ENCODE measurements at regions of chr15 and their contacts with region 1.

Region 1: GRCh38 chr15:95025924-95026728 is 794.8 kb downstream of the MCTP2 start:
- DNase-seq: peak; percentile 60 to 80 (median 64)
- ATAC-seq: peak; percentile 98
- H3K4me3 ChIP-seq: no peak overlapping the region
- H3K27ac ChIP-seq: no peak overlapping the region
- H3K4me1 ChIP-seq: no peaks in the 10 kb centered on the region
- H3K27me3 ChIP-seq: no peaks in the 10 kb centered on the region
- CTCF ChIP-seq: peak; percentile 59 to 76 (median 64)
- EP300 ChIP-seq: no peak
- POLR2A ChIP-seq: no peak
- RAD21 ChIP-seq: peak; percentile 47 to 76

Region 2: DNA sequence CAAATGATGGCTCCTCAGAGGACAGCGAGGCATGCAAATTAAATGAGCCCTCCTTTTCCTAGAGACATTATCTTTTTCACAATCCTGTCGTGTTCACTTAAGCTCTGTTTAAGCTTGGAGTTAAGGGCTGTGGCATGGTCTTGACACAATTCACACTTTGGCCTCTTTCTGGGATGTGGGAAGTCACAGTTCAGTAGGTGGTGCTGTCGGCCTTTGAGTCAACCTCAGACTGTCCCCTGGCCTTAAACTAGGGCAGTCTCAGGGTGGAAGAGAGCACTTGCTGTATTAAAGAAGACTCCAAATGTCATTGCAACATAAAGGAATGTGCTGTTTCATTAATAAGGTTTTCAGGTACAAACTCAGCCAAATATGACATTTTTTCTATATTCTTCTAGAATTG is 443.8 kb before region 1 on chr15:
- CTCF ChIA-PET with region 1: no interaction called
- POLR2A ChIA-PET with region 1: no interaction called
- in situ Hi-C with region 1: no loop called
- intact Hi-C with region 1: loop called (anchors 10 kb)
- DNase-seq: peak; percentile 14 to 46 (median 20)
- ATAC-seq: peak; percentile 91
- H3K4me3 ChIP-seq: no peak overlapping the region
- H3K27ac ChIP-seq: no peak overlapping the region
- H3K4me1 ChIP-seq: no peaks in the 10 kb centered on the region
- H3K27me3 ChIP-seq: no peaks in the 10 kb centered on the region; a peak in 1 of 5 replicates
- CTCF ChIP-seq: peak; percentile 37 to 57 (median 57); a peak in 5 of 6 replicates
- EP300 ChIP-seq: no peak
- POLR2A ChIP-seq: no peak
- RAD21 ChIP-seq: peak; percentile 67 to 70

Region 3: DNA sequence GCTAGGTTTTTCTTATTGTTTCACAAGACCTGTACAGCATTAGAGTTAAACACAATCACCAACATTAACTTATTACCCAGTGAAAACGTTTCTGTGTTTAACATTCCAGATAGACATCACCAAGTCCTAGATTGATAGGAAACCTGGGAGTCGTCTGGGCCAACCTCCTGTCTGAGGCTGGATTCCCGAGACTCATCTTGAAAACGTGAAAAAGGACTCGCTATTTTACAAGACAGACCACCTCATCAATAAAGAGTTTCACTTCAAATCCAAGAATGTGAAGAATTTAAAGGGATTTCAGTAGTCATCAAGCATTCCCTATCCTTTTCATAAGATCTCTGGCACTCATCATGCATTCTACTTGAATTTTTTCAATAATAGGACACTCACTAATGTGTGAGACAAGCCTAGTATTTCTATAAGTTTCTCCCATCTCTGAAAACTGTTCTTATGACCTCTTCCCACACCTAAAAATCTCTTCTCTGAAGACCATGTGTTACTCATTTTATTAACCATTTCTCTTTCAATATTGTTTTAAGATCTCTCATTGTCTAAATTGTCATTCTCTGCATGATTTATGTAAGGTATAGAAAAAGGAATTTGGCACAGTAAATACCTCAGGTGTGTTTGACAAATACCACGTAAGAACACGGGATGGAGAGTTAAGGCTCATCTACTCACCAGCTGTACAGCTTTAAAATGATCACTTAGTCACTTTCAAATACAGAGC is 167.9 kb before region 1 on chr15:
- CTCF ChIA-PET with region 1: no interaction called
- POLR2A ChIA-PET with region 1: no interaction called
- in situ Hi-C with region 1: no loop called
- intact Hi-C with region 1: loop called (anchors 5 kb)
- DNase-seq: peak in 2 of 4 experiments; percentile 10 to 27
- ATAC-seq: peak; percentile 15
- H3K4me3 ChIP-seq: peak overlapping the region; percentile 72
- H3K27ac ChIP-seq: peak overlapping the region; percentile 92
- H3K4me1 ChIP-seq: peaks cover 9 to 20% of the 10 kb centered on the region in 2 experiments; a peak in 4 of 5 replicates
- H3K27me3 ChIP-seq: no peaks in the 10 kb centered on the region
- CTCF ChIP-seq: no peak
- EP300 ChIP-seq: no peak
- POLR2A ChIP-seq: no peak
- RAD21 ChIP-seq: no peak

Region 4: GRCh38 chr15:95259513-95259912 is 233.4 kb after region 1 on chr15:
- CTCF ChIA-PET with region 1: no interaction called
- POLR2A ChIA-PET with region 1: no interaction called
- in situ Hi-C with region 1: no loop called
- intact Hi-C with region 1: loop called (anchors 1 kb)
- DNase-seq: peak; percentile 49 to 85 (median 58)
- ATAC-seq: peak; percentile 95
- H3K4me3 ChIP-seq: no peak overlapping the region
- H3K27ac ChIP-seq: no peak overlapping the region
- H3K4me1 ChIP-seq: peaks cover 0 to 4% of the 10 kb centered on the region in 2 experiments; a peak in 3 of 5 replicates
- H3K27me3 ChIP-seq: no peaks in the 10 kb centered on the region; a peak in 1 of 5 replicates
- CTCF ChIP-seq: peak; percentile 64 to 85 (median 79)
- EP300 ChIP-seq: 0 out of 2 replicates have a peak, but pooled peaks have one; percentile 2
- POLR2A ChIP-seq: no peak
- RAD21 ChIP-seq: peak; percentile 85 to 91

Region 5: DNA sequence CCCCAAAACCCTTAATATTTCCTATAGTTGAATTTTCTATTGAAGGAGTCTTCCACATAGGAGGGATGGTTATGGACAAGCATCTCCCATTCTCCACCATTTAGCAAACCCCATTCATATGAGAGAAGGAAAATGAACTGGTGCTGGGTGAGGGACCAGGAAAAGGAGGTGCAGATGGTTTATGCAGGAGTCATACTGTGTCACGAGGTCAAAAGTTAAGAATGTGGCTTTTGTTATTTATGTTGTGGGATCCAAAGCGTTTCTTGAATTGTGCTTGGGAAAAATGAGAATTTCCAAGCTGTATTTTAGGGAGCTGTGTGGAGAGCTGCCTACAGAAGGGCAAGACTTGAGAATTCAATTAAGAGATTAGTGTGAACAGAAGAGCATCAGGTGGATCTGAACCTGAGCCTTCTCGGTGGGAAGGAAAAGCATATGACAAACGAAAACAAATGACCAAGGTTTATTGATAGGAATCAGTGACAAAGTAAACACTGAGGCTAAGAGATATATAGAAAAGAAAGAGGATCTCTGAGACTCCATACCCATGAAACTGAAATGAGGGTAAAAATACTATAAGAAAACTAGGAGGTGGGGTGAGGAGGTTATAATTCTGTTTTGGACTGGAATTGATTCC is 831.1 kb after region 1 on chr15:
- CTCF ChIA-PET with region 1: no interaction called
- POLR2A ChIA-PET with region 1: no interaction called
- in situ Hi-C with region 1: no loop called
- intact Hi-C with region 1: loop called (anchors 10 kb)
- DNase-seq: no peak
- ATAC-seq: no peak
- H3K4me3 ChIP-seq: no peak overlapping the region
- H3K27ac ChIP-seq: no peak overlapping the region
- H3K4me1 ChIP-seq: peaks cover 0 to 4% of the 10 kb centered on the region in 2 experiments; a peak in 2 of 5 replicates
- H3K27me3 ChIP-seq: no peaks in the 10 kb centered on the region
- CTCF ChIP-seq: no peak
- EP300 ChIP-seq: no peak
- POLR2A ChIP-seq: no peak
- RAD21 ChIP-seq: no peak